ENCODE measurements at regions of chr22 and their contacts with region 1.

Region 1: DNA sequence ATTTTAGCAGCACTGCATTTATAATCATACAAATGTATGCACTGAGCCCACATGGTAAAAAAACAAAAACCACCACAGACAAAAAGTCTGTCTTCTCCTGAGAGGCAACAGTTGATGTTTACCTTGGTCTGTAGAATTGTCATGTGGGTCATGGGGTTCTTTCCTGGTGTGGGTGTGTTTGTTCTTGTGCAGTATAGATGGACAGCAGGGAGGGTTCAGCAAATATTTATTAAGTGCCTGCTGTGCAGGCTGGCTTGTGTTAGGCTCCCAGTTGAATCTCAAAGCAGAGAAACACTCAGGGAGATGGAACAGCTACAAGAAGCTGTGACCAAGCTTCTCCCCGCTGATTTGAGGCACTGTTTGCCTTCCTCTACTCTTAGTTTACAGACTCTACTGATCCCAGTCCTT is 82.2 kb downstream of the PISD start:
- DNase-seq: no peak
- H3K4me3 ChIP-seq: no peak overlapping the region
- H3K27ac ChIP-seq: no peak overlapping the region
- H3K4me1 ChIP-seq: no peaks in the 10 kb centered on the region
- H3K27me3 ChIP-seq: no peaks in the 10 kb centered on the region
- CTCF ChIP-seq: no peak
- EP300 ChIP-seq: no peak
- POLR2A ChIP-seq: no peak

Region 2: DNA sequence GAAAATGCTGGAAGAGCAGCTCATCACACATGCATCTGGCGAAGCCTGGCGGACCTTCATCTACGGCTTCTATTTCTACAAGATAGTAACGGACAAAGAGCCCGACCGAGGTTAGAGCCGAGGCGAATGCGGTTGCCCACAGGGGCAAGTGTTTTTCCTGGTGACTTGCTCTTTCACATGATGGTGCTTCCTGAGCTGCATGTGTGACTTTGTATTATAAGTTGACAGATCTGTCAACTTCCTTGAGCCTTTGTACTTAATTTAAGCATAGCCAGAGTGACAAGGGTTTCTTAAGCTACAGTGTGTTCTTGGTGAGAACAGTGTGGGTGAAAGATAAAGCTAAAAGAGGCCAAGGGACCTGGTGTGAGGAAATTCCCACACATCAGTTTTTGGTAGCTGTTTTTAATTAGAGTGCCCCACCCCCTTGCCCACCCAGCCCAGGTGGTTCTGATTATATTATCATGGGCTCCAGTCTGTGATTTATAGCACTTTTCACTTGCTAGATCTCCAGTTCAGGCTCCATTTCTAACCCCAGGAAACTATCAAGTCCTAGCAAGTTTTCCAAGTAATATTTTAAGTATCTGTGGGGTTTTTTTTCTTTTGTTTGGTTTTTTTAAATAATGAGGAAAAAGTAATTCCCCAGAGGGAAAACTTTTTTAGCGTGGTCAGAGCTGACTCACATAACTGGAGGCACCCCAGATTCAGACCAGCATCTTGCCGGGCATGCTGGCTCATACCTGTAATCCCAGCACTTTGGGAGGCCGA is 296.5 kb after region 1 on chr22:
- in situ Hi-C with region 1: no loop called
- intact Hi-C with region 1: loop called (anchors 5 kb)
- DNase-seq: no peak
- H3K4me3 ChIP-seq: no peak overlapping the region
- H3K27ac ChIP-seq: no peak overlapping the region
- H3K4me1 ChIP-seq: peaks cover 0 to 5% (median 0%) of the 10 kb centered on the region in 4 donors
- H3K27me3 ChIP-seq: no peaks in the 10 kb centered on the region
- CTCF ChIP-seq: no peak
- EP300 ChIP-seq: no peak
- POLR2A ChIP-seq: no peak